ENCODE measurements at regions of chr15 and their contacts with region 1.

Region 1: DNA sequence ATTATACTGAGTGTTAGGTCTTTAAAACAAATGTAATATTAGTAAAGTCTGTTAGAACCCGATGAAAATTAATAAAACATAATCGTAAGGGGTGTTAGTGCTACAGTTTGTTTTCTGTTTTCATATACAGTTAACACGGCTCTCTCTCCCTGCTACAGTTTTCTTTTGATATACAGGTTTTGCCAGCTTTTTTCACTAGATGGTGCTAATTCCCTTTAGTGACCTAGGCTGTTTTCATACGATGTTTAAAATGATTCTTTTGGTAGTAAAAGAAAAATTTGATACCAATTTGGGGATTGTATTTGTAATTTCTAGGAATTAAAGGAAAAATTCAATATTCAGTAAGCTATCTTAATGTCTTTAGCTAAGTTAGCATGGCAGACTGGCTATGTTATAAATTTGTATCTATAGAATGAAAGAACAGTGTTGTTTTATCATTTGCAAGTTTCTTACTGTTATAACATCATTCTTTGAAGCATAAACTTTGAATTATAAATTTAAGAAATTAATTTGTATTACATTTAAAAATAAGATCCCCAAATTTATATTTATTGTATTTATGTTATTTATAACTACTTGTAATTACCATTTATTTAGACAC is 11.5 kb downstream of the APH1B start:
- DNase-seq: no peak
- ATAC-seq: peak; percentile 63

Region 2: DNA sequence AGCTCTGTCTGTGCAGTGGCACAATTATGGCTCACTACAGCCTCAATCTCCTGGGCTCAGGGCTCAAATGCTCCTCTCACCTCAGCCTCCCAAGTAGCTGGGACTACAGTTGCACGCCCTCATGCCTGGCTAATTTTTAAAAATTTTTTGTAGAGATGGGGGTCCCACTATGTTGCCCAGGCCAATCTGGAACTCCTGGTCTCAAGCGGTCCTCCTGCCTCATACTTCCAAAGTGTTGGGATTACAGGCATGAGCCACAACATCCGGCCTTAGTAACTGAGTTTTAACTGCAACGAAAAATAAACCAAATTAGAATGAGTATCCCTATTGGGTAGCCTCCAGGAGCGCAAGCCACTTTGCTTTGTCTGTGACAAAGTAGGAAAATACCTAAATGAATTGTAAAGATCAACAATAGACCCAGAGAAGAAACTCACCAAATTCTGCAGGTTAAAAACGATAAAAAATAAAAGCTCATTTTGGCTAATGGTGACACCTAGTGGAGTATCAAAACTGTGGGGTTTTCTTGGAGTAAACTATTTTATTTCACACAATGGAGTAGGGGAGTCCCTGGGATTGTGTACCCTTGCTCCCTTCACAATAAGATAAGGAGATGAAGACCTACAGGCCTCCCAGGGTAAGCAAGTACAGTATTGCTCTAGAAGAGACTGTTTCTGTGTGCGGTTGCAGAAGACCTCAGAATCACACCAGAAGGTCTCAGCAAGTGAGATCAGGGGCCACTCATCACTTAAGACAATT is 113.8 kb after region 1 on chr15:
- intact Hi-C with region 1: loop called (anchors 1 kb)
- DNase-seq: no peak
- ATAC-seq: peak; percentile 45

Region 3: DNA sequence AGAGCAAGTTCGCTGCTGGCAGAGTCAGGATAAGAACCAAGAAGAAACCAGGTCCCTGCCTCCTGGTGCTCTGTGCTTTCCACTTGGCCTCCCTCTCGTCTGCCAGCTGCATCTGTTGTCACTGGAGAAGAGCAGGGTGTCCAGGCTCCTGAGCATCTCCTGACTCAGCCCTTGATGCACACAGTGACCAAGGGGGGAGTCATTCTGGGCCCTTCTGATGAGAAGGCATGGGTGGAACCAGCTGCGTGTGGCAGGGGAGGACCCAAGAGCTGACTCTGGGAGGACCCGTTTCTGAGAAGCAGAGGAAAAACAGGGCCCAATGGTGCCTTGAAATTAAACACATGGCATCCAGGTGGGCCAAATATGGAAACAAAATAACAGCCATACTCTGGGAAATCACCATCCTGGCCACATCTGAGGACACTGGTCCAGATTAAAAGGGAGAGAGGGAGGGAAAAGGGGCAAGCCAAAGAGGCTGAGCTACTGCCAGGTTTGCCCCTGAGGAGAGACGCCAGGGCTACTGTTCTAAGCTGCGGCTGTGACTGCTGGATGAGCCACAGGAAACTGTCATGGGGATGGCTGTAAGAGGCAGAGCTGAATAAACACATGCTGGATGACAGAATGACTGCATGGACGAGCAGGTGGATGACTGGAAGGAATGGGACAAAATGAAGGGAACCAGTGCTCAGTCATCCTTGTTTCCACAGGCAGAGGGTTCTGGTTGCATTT is 150.8 kb after region 1 on chr15:
- intact Hi-C with region 1: no loop called
- DNase-seq: no peak
- ATAC-seq: no peak

Region 4: DNA sequence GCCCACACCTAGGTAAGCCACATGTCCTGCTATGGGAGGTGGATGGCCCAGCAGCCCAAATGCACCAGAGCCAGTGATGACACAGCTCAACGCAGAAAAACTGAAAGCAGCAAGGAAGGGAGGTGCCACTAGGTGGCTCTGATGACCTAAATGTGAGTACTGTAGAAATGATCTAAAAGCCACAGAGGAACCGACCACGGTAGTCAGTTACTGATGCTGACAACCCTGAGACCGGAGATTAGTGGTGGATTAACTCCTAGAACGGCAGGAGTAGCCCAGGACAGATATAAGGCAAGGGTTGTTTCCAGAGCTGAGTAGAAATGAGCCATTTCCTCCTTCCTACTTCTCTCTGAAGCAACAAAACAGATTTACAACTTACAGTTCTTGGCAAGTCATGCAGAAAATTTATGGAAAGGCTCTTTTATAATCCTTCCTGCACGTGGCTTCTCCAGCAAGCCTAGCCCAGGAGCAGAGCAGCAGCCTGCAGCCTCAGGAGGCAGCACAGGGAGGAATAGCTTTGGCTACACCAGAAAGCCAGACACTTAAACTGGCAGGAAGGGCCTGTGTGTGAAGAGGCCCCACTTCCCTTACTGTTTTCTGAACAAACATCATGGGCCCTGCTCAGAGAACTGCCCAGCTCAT is 321.4 kb after region 1 on chr15:
- intact Hi-C with region 1: no loop called
- DNase-seq: no peak
- ATAC-seq: peak; percentile 80